Heart right ventricle (tissue), 16 donors: ENCODE measurements at regions of chr5 and their contacts with region 1.

Region 1: GRCh38 chr5:147223948-147224791 is 10.7 kb upstream of the STK32A start:
- DNase-seq: peak in 1 of 2 donors; percentile 40
- ATAC-seq: peak in 7 of 8 donors; percentile 55 to 81 (median 73)
- H3K4me3 ChIP-seq: no peak overlapping the region
- H3K27ac ChIP-seq: no peak overlapping the region
- H3K4me1 ChIP-seq: no peaks in the 10 kb centered on the region
- H3K27me3 ChIP-seq: peaks cover 0 to 15% (median 4%) of the 10 kb centered on the region in 7 donors
- CTCF ChIP-seq: peak; percentile 39 to 77 (median 64)

Region 2: GRCh38 chr5:147369742-147370374 is 145.7 kb after region 1 on chr5:
- intact Hi-C with region 1: loop called in 7 of 10 experiments (anchors 2 to 10 kb)
- DNase-seq: no peak
- ATAC-seq: no peak
- H3K4me3 ChIP-seq: no peak overlapping the region
- H3K27ac ChIP-seq: no peak overlapping the region
- H3K4me1 ChIP-seq: no peaks in the 10 kb centered on the region
- H3K27me3 ChIP-seq: no peaks in the 10 kb centered on the region
- CTCF ChIP-seq: peak in 8 of 9 donors; percentile 13 to 66 (median 56)

Region 3: GRCh38 chr5:147558826-147559225 is 334.7 kb after region 1 on chr5:
- intact Hi-C with region 1: loop called in 3 of 10 experiments (anchors 5 kb)
- DNase-seq: peak; percentile 35 to 58
- ATAC-seq: peak in 7 of 8 donors; percentile 73 to 88 (median 81)
- H3K4me3 ChIP-seq: no peak overlapping the region
- H3K27ac ChIP-seq: peak overlapping the region in 2 of 10 donors; percentile 26 to 38
- H3K4me1 ChIP-seq: peaks cover 0 to 31% (median 14%) of the 10 kb centered on the region in 9 donors
- H3K27me3 ChIP-seq: no peaks in the 10 kb centered on the region
- CTCF ChIP-seq: peak; percentile 37 to 77 (median 66)

Region 4: DNA sequence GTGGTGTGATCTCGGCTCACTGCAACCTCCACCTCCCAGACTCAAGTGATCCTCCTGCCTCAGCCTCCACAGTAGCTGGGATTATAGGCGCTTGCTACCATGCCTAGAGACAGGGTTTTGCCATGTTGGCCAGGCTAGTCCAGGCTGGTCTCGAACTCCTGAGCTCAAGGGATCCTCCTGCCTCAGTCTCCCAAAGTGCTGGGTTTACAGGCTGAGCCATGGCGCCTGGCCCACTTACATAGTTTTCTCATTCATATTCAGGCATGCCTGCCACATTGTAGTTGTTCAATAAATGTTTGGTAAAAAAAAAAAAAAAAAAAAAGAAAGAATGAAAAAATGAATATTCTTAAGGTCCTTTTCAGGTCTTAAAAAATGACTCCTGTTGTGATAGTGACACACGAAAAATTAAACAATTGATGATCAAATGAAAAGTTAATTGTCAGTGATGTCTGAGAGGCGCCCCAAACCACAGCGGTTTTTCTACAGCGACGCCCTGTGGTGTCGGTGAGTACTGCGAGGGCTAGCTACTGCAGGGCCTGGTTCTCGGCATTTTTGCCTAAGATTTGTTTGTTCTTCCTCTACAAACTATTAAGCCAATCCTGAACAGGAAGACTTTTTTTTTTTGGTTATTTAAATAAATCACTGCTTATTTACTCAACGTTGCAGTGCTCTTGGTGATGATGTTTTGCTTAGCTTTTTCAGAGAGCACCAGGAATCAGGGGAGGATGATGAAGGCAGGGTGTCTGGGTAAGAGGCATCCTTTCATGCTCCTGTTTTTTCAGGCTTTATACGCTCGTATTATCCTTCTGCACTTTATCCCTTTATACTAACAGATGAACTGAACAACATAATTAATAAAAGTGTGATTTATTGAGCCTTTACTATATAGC is 352.7 kb after region 1 on chr5:
- intact Hi-C with region 1: loop called in 8 of 10 experiments (anchors 1 to 10 kb)
- DNase-seq: peak; percentile 56 to 73
- ATAC-seq: peak in 4 of 8 donors; percentile 51 to 74 (median 64)
- H3K4me3 ChIP-seq: no peak overlapping the region
- H3K27ac ChIP-seq: no peak overlapping the region
- H3K4me1 ChIP-seq: peaks cover 0 to 24% (median 4%) of the 10 kb centered on the region in 9 donors
- H3K27me3 ChIP-seq: no peaks in the 10 kb centered on the region
- CTCF ChIP-seq: peak; percentile 74 to 90 (median 86)

Region 5: GRCh38 chr5:147586832-147587231 is 362.7 kb after region 1 on chr5:
- intact Hi-C with region 1: loop called in 1 of 10 experiments (anchors 10 kb)
- DNase-seq: no peak
- ATAC-seq: no peak
- H3K4me3 ChIP-seq: no peak overlapping the region
- H3K27ac ChIP-seq: no peak overlapping the region
- H3K4me1 ChIP-seq: no peaks in the 10 kb centered on the region
- H3K27me3 ChIP-seq: peaks cover 0 to 9% (median 0%) of the 10 kb centered on the region in 7 donors
- CTCF ChIP-seq: no peak